Activated T-helper 1 cell treated with anti-CD3 and anti-CD28 coated beads, Interleukin-12 subunit alpha, Interleukin-12 subunit beta, Interleukin-2, Interleukin-4 antibody, amounts not matched to agents 30 ng/mL and 10 ng/mL and 1 ng/mL, durations not matched to agents 14 hours and 24 hours and 36 hours (primary cell): ENCODE measurements at regions of chr3 and their contacts with region 1.

Region 1: DNA sequence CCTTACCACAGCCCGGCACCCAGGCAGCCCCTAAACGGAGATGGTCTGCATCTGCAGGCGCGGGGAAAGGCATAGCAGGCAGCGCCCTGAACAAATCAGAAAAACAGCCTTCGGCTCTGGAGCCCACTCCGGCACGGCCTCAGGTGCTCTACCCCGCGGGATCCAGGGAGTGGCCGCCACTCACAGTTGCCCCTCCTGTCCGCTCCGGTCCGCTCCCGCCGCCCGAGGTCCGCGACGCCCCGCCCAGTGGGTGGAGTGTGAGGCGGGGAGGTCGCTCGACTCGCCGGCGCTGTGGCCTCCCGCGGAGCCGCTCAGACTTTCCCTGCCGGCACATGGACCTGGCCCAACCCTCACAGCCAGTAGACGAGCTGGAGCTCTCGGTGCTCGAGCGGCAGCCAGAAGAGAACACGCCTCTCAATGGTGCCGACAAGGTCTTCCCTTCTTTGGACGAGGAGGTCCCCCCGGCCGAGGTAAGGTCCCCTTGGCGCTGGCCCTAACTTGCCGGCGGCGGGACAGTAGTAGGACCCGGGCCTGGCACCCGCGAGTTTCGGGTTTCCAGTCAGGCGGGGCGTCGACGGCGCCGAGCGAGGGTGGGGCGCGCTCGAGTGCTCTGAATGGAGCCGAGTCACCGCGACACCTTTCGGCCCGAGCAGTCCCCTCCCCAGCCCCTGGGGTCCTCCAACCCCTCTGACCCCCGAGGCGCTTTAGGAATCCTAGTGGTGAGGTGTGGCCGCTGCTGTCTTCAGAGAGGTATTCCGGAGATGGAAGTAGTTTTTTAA is at the start of gene C3orf52:
- DNase-seq: peak; percentile 74
- H3K4me3 Mint-ChIP-seq: peak within 1 kb of the TSS; percentile 91
- H3K27ac Mint-ChIP-seq: peak within 1 kb of the TSS; percentile 88
- H3K4me1 Mint-ChIP-seq: peaks cover 54% of the 10 kb centered on the region
- H3K27me3 Mint-ChIP-seq: peaks cover 2% of the 10 kb centered on the region
- total RNA-seq, gene C3orf52: 12.4 and 12.8 TPM in 2 replicates

Region 2: GRCh38 chr3:112056451-112056978 is 29.8 kb before region 1 on chr3:
- intact Hi-C with region 1: loop called (anchors 1 kb)
- DNase-seq: no peak
- H3K4me3 Mint-ChIP-seq: no peak overlapping the region
- H3K27ac Mint-ChIP-seq: peak overlapping the region; percentile 53
- H3K4me1 Mint-ChIP-seq: peaks cover 31% of the 10 kb centered on the region
- H3K27me3 Mint-ChIP-seq: peaks cover 4% of the 10 kb centered on the region

Region 3: DNA sequence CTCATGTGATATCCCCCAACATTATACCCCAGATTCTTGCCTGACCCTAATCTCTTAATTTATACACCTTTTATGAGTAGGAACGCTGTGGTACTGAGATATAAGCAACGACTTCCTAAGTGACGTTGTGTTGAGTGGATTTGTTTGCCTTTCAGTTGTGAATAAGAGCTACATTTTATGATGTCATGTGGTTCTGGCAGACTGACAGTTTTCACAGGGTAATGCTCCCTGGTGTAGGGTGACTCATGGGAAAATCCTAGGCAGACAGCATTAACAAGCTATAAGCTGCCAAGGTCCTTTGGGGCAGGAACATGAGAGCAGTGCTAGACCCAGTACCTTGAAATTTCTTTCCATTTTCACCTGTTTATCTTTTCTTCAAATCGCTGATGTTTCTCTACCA is 11.1 kb after region 1 on chr3:
- intact Hi-C with region 1: loop called (anchors 1 kb)
- DNase-seq: no peak
- H3K4me3 Mint-ChIP-seq: no peak overlapping the region
- H3K27ac Mint-ChIP-seq: peak overlapping the region; percentile 56
- H3K4me1 Mint-ChIP-seq: peaks cover 36% of the 10 kb centered on the region
- H3K27me3 Mint-ChIP-seq: no peaks in the 10 kb centered on the region